ENCODE measurements at regions of chr7 and their contacts with region 1.

Region 1: GRCh38 chr7:25877802-25878789 is 273.9 kb upstream of the NFE2L3 start:
- DNase-seq: peak; percentile 70
- H3K4me3 ChIP-seq: no peak overlapping the region
- H3K27ac ChIP-seq: no peak overlapping the region
- H3K4me1 ChIP-seq: peaks cover 13% of the 10 kb centered on the region
- H3K27me3 ChIP-seq: peaks cover 82% of the 10 kb centered on the region
- CTCF ChIP-seq: no peak

Region 2: GRCh38 chr7:26667500-26668133 is 789.5 kb after region 1 on chr7:
- CTCF ChIA-PET with region 1: no interaction called
- POLR2A ChIA-PET with region 1: no interaction called
- intact Hi-C with region 1: loop called (anchors 5 kb)
- DNase-seq: peak; percentile 95
- H3K4me3 ChIP-seq: no peak overlapping the region
- H3K27ac ChIP-seq: no peak overlapping the region
- H3K4me1 ChIP-seq: no peaks in the 10 kb centered on the region
- H3K27me3 ChIP-seq: peaks cover 80% of the 10 kb centered on the region
- CTCF ChIP-seq: peak; percentile 93

Measured in A673 (cell line).